MCF 10A (cell line): ENCODE measurements at regions of chr9 and their contacts with region 1.

Region 1: GRCh38 chr9:122453677-122454135 is 24.0 kb downstream of the OR1J1 start:
- DNase-seq: no peak
- H3K4me3 Mint-ChIP-seq: no peak overlapping the region
- H3K27ac Mint-ChIP-seq: peak overlapping the region; percentile 19
- H3K4me1 Mint-ChIP-seq: no peaks in the 10 kb centered on the region
- H3K27me3 Mint-ChIP-seq: peaks cover 43% of the 10 kb centered on the region
- CTCF ChIP-seq: no peak

Region 2: GRCh38 chr9:122092611-122093506 is 360.8 kb before region 1 on chr9 and contains the start of gene TTLL11:
- CTCF ChIA-PET with region 1: interaction called, 29 read pairs
- POLR2A ChIA-PET with region 1: no interaction called
- intact Hi-C with region 1: loop called (anchors 1 kb)
- DNase-seq: peak; percentile 95
- H3K4me3 Mint-ChIP-seq: peak within 1 kb of the TSS; percentile 91
- H3K27ac Mint-ChIP-seq: peak within 1 kb of the TSS; percentile 57
- H3K4me1 Mint-ChIP-seq: peaks cover 33% of the 10 kb centered on the region
- H3K27me3 Mint-ChIP-seq: no peaks in the 10 kb centered on the region
- CTCF ChIP-seq: no peak
- total RNA-seq, gene TTLL11: 9.0 and 13.6 TPM in 2 replicates

Region 3: GRCh38 chr9:122364783-122365150 is 88.9 kb before region 1 on chr9:
- CTCF ChIA-PET with region 1: interaction called, 7 read pairs
- POLR2A ChIA-PET with region 1: no interaction called
- intact Hi-C with region 1: loop called (anchors 5 kb)
- DNase-seq: peak; percentile 38
- H3K4me3 Mint-ChIP-seq: no peak overlapping the region
- H3K27ac Mint-ChIP-seq: no peak overlapping the region
- H3K4me1 Mint-ChIP-seq: peaks cover 15% of the 10 kb centered on the region
- H3K27me3 Mint-ChIP-seq: no peaks in the 10 kb centered on the region
- CTCF ChIP-seq: no peak

Region 4: GRCh38 chr9:122379340-122379739 is 74.4 kb before region 1 on chr9:
- CTCF ChIA-PET with region 1: interaction called, 9 read pairs
- POLR2A ChIA-PET with region 1: no interaction called
- intact Hi-C with region 1: loop called (anchors 1 kb)
- DNase-seq: peak; percentile 35
- H3K4me3 Mint-ChIP-seq: no peak overlapping the region
- H3K27ac Mint-ChIP-seq: no peak overlapping the region
- H3K4me1 Mint-ChIP-seq: peaks cover 30% of the 10 kb centered on the region
- H3K27me3 Mint-ChIP-seq: no peaks in the 10 kb centered on the region
- CTCF ChIP-seq: peak; percentile 33

Region 5: GRCh38 chr9:122464633-122465567 is 11.2 kb after region 1 on chr9:
- CTCF ChIA-PET with region 1: interaction called, 26 read pairs
- POLR2A ChIA-PET with region 1: interaction called, 3 read pairs
- intact Hi-C with region 1: no loop called
- DNase-seq: peak; percentile 95
- H3K4me3 Mint-ChIP-seq: peak overlapping the region; percentile 71
- H3K27ac Mint-ChIP-seq: peak overlapping the region; percentile 41
- H3K4me1 Mint-ChIP-seq: peaks cover 5% of the 10 kb centered on the region
- H3K27me3 Mint-ChIP-seq: peaks cover 71% of the 10 kb centered on the region
- CTCF ChIP-seq: peak; percentile 78